B cell (primary cell): ENCODE measurements at regions of chr19 and their contacts with region 1.

Region 1: DNA sequence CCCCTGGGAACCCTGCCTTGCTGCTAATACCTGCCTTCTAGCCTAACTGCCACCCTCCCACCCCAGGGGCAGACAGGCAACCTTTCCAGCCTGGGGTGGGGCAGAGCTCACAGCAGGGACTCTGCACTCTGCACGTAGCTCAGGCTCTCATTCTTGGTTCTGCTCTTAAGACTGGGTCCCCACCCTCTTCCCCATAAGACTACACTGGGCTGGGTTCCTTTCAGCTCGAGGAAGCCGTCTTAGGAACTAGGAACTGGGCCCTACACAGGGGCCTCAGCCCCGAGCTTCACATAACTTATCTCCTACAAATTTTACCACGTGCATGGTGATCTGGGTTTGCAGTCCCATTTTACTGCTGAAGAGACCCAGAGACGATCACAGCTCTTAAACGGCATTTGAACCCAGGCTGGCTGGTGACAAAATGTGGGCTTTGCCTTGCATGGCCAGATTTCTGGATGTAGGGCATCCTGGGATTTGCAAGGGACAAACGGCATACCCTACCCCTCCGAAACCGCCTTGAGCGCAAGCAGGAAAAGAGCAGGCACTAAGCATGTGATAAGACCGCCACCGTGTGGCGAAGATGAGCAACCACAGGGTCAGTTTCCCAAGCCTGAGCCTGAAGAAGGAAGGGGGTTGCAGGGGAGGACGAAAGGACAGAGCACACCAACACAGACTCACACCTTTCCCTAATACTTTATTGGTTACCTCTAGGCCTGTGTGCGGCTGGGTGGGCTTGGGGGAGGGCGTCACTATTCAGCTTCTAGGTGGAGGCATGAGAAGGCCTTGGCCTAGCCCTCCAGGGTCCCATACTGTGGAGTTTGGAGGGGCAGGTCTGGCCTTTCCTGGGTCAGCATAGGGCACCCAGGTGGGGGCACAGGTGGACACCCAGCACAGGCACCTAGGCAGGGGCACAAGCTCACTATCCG is 5.1 kb downstream of the JUNB start:
- DNase-seq: peak; percentile 89
- ATAC-seq: no peak
- H3K4me3 ChIP-seq: peak overlapping the region in 4 of 5 experiments; percentile 14 to 52 (median 34)
- H3K4me3 Mint-ChIP-seq: peak overlapping the region; percentile 87
- H3K27ac ChIP-seq: peak overlapping the region; percentile 3 to 57
- H3K27ac Mint-ChIP-seq: peak overlapping the region; percentile 88
- H3K4me1 ChIP-seq: peaks cover 32 to 39% of the 10 kb centered on the region in 2 donors
- H3K4me1 Mint-ChIP-seq: peaks cover 28% of the 10 kb centered on the region
- H3K27me3 ChIP-seq: no peaks in the 10 kb centered on the region
- H3K27me3 Mint-ChIP-seq: no peaks in the 10 kb centered on the region
- CTCF ChIP-seq: peak; percentile 96

Region 2: GRCh38 chr19:12666265-12667048 is 130.0 kb before region 1 on chr19 and contains the starts of genes MAN2B1 and WDR83:
- CTCF ChIA-PET with region 1: interaction called, 12 read pairs
- POLR2A ChIA-PET with region 1: interaction called, 5 read pairs
- intact Hi-C with region 1: no loop called
- DNase-seq: peak; percentile 91
- ATAC-seq: peak; percentile 71
- H3K4me3 ChIP-seq: peak within 1 kb of the TSS; percentile 84 to 99 (median 94)
- H3K4me3 Mint-ChIP-seq: peak within 1 kb of the TSS; percentile 98
- H3K27ac ChIP-seq: peak within 1 kb of the TSS; percentile 95 to 99
- H3K27ac Mint-ChIP-seq: peak within 1 kb of the TSS; percentile 97
- H3K4me1 ChIP-seq: peaks cover 37 to 60% of the 10 kb centered on the region in 2 donors
- H3K4me1 Mint-ChIP-seq: peaks cover 67% of the 10 kb centered on the region
- H3K27me3 ChIP-seq: no peaks in the 10 kb centered on the region
- H3K27me3 Mint-ChIP-seq: no peaks in the 10 kb centered on the region
- CTCF ChIP-seq: no peak
- total RNA-seq, gene MAN2B1: 252 and 256 TPM in 2 replicates
- total RNA-seq, gene WDR83: 24.6 and 25.8 TPM in 2 replicates

Region 3: GRCh38 chr19:12757544-12758274 is 38.7 kb before region 1 on chr19:
- CTCF ChIA-PET with region 1: interaction called, 1,147 read pairs
- POLR2A ChIA-PET with region 1: interaction called, 9 read pairs
- intact Hi-C with region 1: loop called (anchors 1 kb)
- DNase-seq: peak; percentile 75
- ATAC-seq: peak; percentile 72
- H3K4me3 ChIP-seq: peak overlapping the region in 3 of 5 experiments; percentile 27 to 42 (median 37)
- H3K4me3 Mint-ChIP-seq: peak overlapping the region; percentile 52
- H3K27ac ChIP-seq: no peak overlapping the region
- H3K27ac Mint-ChIP-seq: no peak overlapping the region
- H3K4me1 ChIP-seq: peaks cover 7 to 8% of the 10 kb centered on the region in 2 donors
- H3K4me1 Mint-ChIP-seq: peaks cover 11% of the 10 kb centered on the region
- H3K27me3 ChIP-seq: peaks cover 0 to 28% (median 5%) of the 10 kb centered on the region in 4 experiments
- H3K27me3 Mint-ChIP-seq: peaks cover 23% of the 10 kb centered on the region
- CTCF ChIP-seq: peak; percentile 88

Region 4: DNA sequence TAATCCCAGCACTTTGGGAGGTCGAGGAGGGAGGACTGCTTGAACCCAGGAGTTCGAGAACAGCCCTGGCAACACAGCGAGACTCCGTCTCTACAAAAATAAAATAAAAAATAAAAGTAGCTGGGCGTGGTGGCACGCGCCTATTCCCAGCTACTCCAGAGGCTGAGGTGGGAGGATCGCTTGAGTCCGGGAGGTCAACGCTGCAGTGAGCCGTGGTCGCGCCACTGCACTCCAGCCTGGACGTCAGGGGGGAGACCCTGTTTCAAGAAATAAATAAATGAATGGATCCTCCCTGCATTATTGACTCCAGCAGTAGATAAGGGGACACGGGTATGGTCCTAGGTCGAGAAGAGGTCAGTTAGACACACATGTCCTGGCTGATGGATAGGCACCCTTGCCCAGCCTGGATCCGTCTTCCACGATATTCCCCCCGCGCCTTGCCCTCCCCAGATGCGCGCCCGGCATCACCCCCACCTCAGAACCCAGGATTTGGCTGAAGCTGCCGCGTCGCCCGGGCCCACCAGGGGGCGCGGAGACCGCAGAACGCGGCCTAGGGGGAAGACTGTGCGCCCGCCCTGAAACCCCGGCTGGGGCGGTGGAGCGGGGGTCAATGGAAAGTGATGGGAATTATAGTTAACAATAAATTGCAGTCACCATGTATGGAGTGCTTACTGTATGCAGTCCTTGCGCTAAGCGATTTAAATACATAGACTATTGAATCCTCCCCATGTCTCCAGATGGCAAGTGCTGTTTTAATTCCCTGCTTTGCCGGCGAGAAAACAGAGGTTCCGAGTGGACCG is 19.0 kb before region 1 on chr19:
- CTCF ChIA-PET with region 1: interaction called, 1,147 read pairs
- POLR2A ChIA-PET with region 1: interaction called, 233 read pairs
- intact Hi-C with region 1: loop called (anchors 1 kb)
- DNase-seq: peak; percentile 90
- ATAC-seq: peak; percentile 29
- H3K4me3 ChIP-seq: peak overlapping the region; percentile 63 to 89 (median 75)
- H3K4me3 Mint-ChIP-seq: peak overlapping the region; percentile 88
- H3K27ac ChIP-seq: peak overlapping the region; percentile 83 to 86
- H3K27ac Mint-ChIP-seq: peak overlapping the region; percentile 84
- H3K4me1 ChIP-seq: peaks cover 27 to 47% of the 10 kb centered on the region in 2 donors
- H3K4me1 Mint-ChIP-seq: peaks cover 48% of the 10 kb centered on the region
- H3K27me3 ChIP-seq: no peaks in the 10 kb centered on the region
- H3K27me3 Mint-ChIP-seq: no peaks in the 10 kb centered on the region
- CTCF ChIP-seq: peak; percentile 99

Region 5: DNA sequence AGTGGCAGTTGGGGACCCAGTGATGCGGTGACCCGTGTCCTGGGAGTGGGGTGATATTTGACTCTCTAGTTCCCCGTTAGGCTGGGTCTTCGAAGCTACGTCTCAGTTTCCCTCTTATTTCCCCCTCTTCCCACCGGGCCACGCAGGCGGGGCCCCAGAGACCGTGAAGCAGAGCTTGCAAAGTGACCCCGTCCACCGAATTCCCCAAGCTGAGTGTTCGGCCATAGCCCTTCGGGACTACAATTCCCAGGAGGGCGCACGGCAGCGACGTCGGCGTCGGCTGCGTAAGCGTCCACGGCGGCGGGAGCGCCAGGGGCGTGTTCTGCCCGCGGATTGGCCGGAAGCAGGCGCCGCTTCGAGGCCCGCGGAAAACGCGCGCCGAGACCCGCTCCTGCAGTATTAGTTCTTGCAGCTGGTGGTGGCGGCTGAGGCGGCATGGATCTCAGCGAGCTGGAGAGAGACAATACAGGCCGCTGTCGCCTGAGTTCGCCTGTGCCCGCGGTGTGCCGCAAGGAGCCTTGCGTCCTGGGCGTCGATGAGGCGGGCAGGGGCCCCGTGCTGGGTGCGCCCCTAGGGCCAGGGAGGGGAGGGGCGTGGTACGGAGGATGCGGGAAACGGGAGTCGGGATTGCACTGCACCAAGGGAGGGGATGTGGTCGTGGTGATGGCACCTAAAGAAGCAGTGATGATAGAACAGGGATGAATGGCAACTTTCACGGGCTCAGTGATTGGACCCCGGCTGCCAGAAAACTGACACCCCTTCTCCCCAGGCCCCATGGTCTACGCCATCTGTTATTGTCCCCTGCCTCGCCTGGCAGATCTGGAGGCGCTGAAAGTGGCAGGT is 10.1 kb after region 1 on chr19 and contains the start of gene RNASEH2A:
- CTCF ChIA-PET with region 1: interaction called, 21 read pairs
- POLR2A ChIA-PET with region 1: interaction called, 11 read pairs
- intact Hi-C with region 1: loop called (anchors 1 kb)
- DNase-seq: peak; percentile 93
- ATAC-seq: peak; percentile 95
- H3K4me3 ChIP-seq: peak within 1 kb of the TSS; percentile 51 to 82 (median 73)
- H3K4me3 Mint-ChIP-seq: peak within 1 kb of the TSS; percentile 96
- H3K27ac ChIP-seq: peak within 1 kb of the TSS; percentile 36 to 61
- H3K27ac Mint-ChIP-seq: peak within 1 kb of the TSS; percentile 87
- H3K4me1 ChIP-seq: peaks cover 14 to 23% of the 10 kb centered on the region in 2 donors
- H3K4me1 Mint-ChIP-seq: peaks cover 25% of the 10 kb centered on the region
- H3K27me3 ChIP-seq: no peaks in the 10 kb centered on the region
- H3K27me3 Mint-ChIP-seq: peaks cover 3% of the 10 kb centered on the region
- CTCF ChIP-seq: no peak
- total RNA-seq, gene RNASEH2A: 16.9 and 18.9 TPM in 2 replicates